MCF 10A (cell line): ENCODE measurements at regions of chr18 and their contacts with region 1.

Region 1: DNA sequence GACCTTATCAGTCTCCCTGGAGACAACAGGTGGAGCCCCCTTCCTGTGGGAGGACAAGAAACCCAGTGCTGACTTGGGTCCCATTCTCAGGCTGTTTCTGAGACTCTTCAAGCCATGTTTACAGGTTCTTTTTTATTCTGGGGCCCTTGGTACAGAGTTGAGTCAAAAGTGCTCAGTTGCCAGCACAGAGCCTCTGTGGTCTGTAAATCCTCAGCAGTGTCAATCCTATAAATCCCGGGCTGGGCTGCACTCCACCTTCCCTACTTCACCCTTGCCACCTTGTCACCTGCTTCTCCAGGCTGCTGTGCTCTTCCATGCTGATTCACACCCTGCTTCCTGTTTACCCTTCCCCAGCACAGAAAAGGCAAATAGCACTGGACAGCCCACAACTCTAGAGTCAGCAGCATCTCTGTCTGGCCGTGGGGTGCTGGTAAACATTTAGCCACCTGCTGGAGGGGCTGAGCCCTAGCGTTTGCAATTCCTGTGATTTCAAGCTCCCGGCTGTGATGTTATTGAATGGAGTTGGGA is 74.7 kb downstream of the TNFRSF11A start:
- DNase-seq: peak; percentile 42
- H3K4me3 Mint-ChIP-seq: no peak overlapping the region
- H3K27ac Mint-ChIP-seq: no peak overlapping the region
- H3K4me1 Mint-ChIP-seq: no peaks in the 10 kb centered on the region
- H3K27me3 Mint-ChIP-seq: no peaks in the 10 kb centered on the region
- CTCF ChIP-seq: peak; percentile 11

Region 2: DNA sequence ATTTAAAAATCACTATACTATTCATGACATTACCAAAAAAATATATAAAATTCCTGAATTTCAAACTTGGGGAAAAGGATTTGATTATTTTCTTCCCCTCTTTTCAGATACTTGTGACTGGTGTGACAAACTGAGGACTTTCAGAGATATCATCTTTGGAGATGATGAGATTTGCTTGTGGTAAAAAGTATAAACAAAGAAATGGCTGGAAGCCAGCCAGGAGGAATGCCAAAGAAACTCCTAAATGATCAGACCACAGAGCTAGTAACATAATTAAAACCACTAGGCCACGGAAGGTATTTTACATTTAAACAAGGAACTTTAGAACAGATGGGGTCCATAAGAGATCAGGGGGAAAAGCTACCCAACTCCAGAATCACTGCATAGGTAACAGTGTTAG is 271.7 kb before region 1 on chr18:
- CTCF ChIA-PET with region 1: no interaction called
- POLR2A ChIA-PET with region 1: no interaction called
- intact Hi-C with region 1: no loop called
- DNase-seq: peak; percentile 46
- H3K4me3 Mint-ChIP-seq: no peak overlapping the region
- H3K27ac Mint-ChIP-seq: no peak overlapping the region
- H3K4me1 Mint-ChIP-seq: peaks cover 10% of the 10 kb centered on the region
- H3K27me3 Mint-ChIP-seq: no peaks in the 10 kb centered on the region
- CTCF ChIP-seq: no peak

Region 3: GRCh38 chr18:62334120-62334519 is 65.7 kb before region 1 on chr18:
- CTCF ChIA-PET with region 1: no interaction called
- POLR2A ChIA-PET with region 1: no interaction called
- intact Hi-C with region 1: loop called (anchors 1 kb)
- DNase-seq: peak; percentile 91
- H3K4me3 Mint-ChIP-seq: no peak overlapping the region
- H3K27ac Mint-ChIP-seq: peak overlapping the region; percentile 39
- H3K4me1 Mint-ChIP-seq: peaks cover 14% of the 10 kb centered on the region
- H3K27me3 Mint-ChIP-seq: no peaks in the 10 kb centered on the region
- CTCF ChIP-seq: no peak

Region 4: GRCh38 chr18:62610701-62611411 is 211.0 kb after region 1 on chr18:
- CTCF ChIA-PET with region 1: no interaction called
- POLR2A ChIA-PET with region 1: no interaction called
- intact Hi-C with region 1: no loop called
- DNase-seq: no peak
- H3K4me3 Mint-ChIP-seq: no peak overlapping the region
- H3K27ac Mint-ChIP-seq: no peak overlapping the region
- H3K4me1 Mint-ChIP-seq: peaks cover 6% of the 10 kb centered on the region
- H3K27me3 Mint-ChIP-seq: peaks cover 46% of the 10 kb centered on the region
- CTCF ChIP-seq: no peak